Left ventricle myocardium superior (tissue), 1 donor: ENCODE measurements at regions of chr15 and their contacts with region 1.

Region 1: DNA sequence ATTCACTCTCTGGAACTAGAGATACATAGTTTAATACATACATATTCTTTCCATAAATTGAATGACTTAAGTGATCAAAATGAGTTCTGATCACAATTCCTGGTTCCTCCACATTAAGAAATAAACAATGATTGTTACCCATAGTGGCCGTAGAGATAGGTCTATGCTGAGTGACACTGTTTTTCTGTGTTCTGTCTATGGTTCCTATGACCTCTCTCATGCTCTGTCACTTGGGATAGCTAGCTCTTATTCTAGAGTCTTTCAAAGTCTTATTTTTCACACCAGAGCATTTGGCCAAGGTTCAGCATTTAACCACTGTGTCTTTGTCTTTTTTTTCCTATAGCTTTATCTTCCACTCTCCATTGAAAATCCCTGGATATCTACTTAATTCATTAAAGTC is 132.4 kb downstream of the GOLGA6L6 start:
- DNase-seq: no peak
- ATAC-seq: no peak

Region 2: GRCh38 chr15:20356444-20356910 is 52.8 kb before region 1 on chr15:
- intact Hi-C with region 1: loop called (anchors 10 kb)
- DNase-seq: peak; percentile 66
- ATAC-seq: peak; percentile 50